SK-N-SH (cell line): ENCODE measurements at regions of chr12 and their contacts with region 1.

Region 1: DNA sequence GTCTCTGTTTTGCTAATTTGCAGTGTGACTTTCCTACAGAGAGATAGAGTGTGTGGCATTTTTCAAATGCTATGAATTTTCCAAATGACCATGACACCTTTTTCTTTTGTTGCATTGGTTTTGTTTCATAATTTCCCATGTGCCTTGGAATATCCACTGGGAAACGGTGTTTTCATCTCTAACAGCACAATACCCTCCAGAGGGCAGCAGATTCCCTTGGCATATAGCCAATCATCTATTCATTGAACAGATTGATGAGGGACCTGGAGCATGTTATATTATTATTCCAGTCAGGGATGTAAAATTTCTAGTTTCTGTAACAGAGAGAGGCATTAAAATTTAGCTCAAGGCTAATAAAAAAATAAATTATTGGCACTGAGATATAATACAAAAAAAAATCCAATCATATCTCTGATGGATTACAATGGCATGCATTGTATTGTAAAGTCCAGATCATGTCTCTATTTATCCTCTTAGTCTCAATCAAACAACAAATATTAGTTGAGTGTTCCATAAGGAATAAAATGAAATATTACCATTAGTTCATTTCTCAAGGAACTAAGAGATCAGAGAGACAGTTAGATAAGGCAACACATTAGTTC is 29.6 kb upstream of the NTN4 start:
- DNase-seq: peak; percentile 65
- H3K4me3 ChIP-seq: no peak overlapping the region
- H3K27ac ChIP-seq: no peak overlapping the region
- H3K4me1 ChIP-seq: no peaks in the 10 kb centered on the region
- H3K27me3 ChIP-seq: no peaks in the 10 kb centered on the region
- CTCF ChIP-seq: peak; percentile 74
- EP300 ChIP-seq: no peak
- RAD21 ChIP-seq: peak; percentile 67

Region 2: GRCh38 chr12:95582230-95583058 is 237.8 kb before region 1 on chr12:
- CTCF ChIA-PET with region 1: interaction called, 11 read pairs
- POLR2A ChIA-PET with region 1: no interaction called
- DNase-seq: peak; percentile 43
- H3K4me3 ChIP-seq: no peak overlapping the region; a peak in 1 of 4 replicates
- H3K27ac ChIP-seq: no peak overlapping the region
- H3K4me1 ChIP-seq: no peaks in the 10 kb centered on the region
- H3K27me3 ChIP-seq: no peaks in the 10 kb centered on the region; the same call in 1 of the 2 replicates
- CTCF ChIP-seq: peak; percentile 66
- EP300 ChIP-seq: no peak
- RAD21 ChIP-seq: peak; percentile 80

Region 3: GRCh38 chr12:95623585-95624042 is 196.6 kb before region 1 on chr12:
- CTCF ChIA-PET with region 1: interaction called, 15 read pairs
- POLR2A ChIA-PET with region 1: no interaction called
- DNase-seq: peak; percentile 69
- H3K4me3 ChIP-seq: peak overlapping the region in 1 of 2 experiments; percentile 56; a peak in 1 of 4 replicates
- H3K27ac ChIP-seq: no peak overlapping the region
- H3K4me1 ChIP-seq: no peaks in the 10 kb centered on the region
- H3K27me3 ChIP-seq: no peaks in the 10 kb centered on the region
- CTCF ChIP-seq: peak; percentile 73
- EP300 ChIP-seq: no peak
- RAD21 ChIP-seq: peak; percentile 84

Region 4: GRCh38 chr12:95653761-95654546 is 166.2 kb before region 1 on chr12:
- CTCF ChIA-PET with region 1: no interaction called
- POLR2A ChIA-PET with region 1: no interaction called
- DNase-seq: no peak
- H3K4me3 ChIP-seq: no peak overlapping the region
- H3K27ac ChIP-seq: no peak overlapping the region
- H3K4me1 ChIP-seq: no peaks in the 10 kb centered on the region
- H3K27me3 ChIP-seq: no peaks in the 10 kb centered on the region
- CTCF ChIP-seq: no peak
- EP300 ChIP-seq: no peak
- RAD21 ChIP-seq: no peak

Region 5: GRCh38 chr12:95848575-95849388 is 28.6 kb after region 1 on chr12:
- CTCF ChIA-PET with region 1: interaction called, 14 read pairs
- POLR2A ChIA-PET with region 1: no interaction called
- DNase-seq: peak; percentile 47
- H3K4me3 ChIP-seq: no peak overlapping the region
- H3K27ac ChIP-seq: no peak overlapping the region
- H3K4me1 ChIP-seq: no peaks in the 10 kb centered on the region
- H3K27me3 ChIP-seq: peaks cover 10% of the 10 kb centered on the region; the same call in 1 of the 2 replicates
- CTCF ChIP-seq: peak; percentile 61
- EP300 ChIP-seq: no peak
- RAD21 ChIP-seq: peak; percentile 86